CD8-positive, alpha-beta T cell (primary cell): ENCODE measurements at regions of chr14 and their contacts with region 1.

Region 1: GRCh38 chr14:22319526-22320361 is 269.3 kb downstream of the DAD1 start:
- DNase-seq: peak in 5 of 9 experiments; percentile 7 to 44 (median 20)
- ATAC-seq: peak; percentile 29
- H3K4me3 ChIP-seq: no peak overlapping the region
- H3K4me3 Mint-ChIP-seq: peak overlapping the region; percentile 67
- H3K27ac ChIP-seq: no peak overlapping the region
- H3K27ac Mint-ChIP-seq: peak overlapping the region; percentile 76
- H3K4me1 ChIP-seq: no peaks in the 10 kb centered on the region
- H3K4me1 Mint-ChIP-seq: no peaks in the 10 kb centered on the region
- H3K27me3 ChIP-seq: no peaks in the 10 kb centered on the region
- H3K27me3 Mint-ChIP-seq: no peaks in the 10 kb centered on the region
- CTCF ChIP-seq: no peak

Region 2: GRCh38 chr14:22296722-22297121 is 23.0 kb before region 1 on chr14:
- CTCF ChIA-PET with region 1: no interaction called
- POLR2A ChIA-PET with region 1: no interaction called
- intact Hi-C with region 1: no loop called
- DNase-seq: no peak
- ATAC-seq: no peak
- H3K4me3 ChIP-seq: no peak overlapping the region
- H3K4me3 Mint-ChIP-seq: no peak overlapping the region
- H3K27ac ChIP-seq: no peak overlapping the region
- H3K27ac Mint-ChIP-seq: no peak overlapping the region
- H3K4me1 ChIP-seq: no peaks in the 10 kb centered on the region
- H3K4me1 Mint-ChIP-seq: no peaks in the 10 kb centered on the region
- H3K27me3 ChIP-seq: no peaks in the 10 kb centered on the region
- H3K27me3 Mint-ChIP-seq: no peaks in the 10 kb centered on the region
- CTCF ChIP-seq: no peak

Region 3: GRCh38 chr14:22375321-22375930 is 55.7 kb after region 1 on chr14:
- CTCF ChIA-PET with region 1: no interaction called
- POLR2A ChIA-PET with region 1: no interaction called
- intact Hi-C with region 1: loop called (anchors 1 to 10 kb)
- DNase-seq: peak in 2 of 9 experiments; percentile 12 to 20
- ATAC-seq: no peak
- H3K4me3 ChIP-seq: no peak overlapping the region
- H3K4me3 Mint-ChIP-seq: no peak overlapping the region
- H3K27ac ChIP-seq: no peak overlapping the region
- H3K27ac Mint-ChIP-seq: no peak overlapping the region
- H3K4me1 ChIP-seq: no peaks in the 10 kb centered on the region
- H3K4me1 Mint-ChIP-seq: no peaks in the 10 kb centered on the region
- H3K27me3 ChIP-seq: no peaks in the 10 kb centered on the region
- H3K27me3 Mint-ChIP-seq: no peaks in the 10 kb centered on the region
- CTCF ChIP-seq: no peak